ENCODE measurements at regions of chr2 and their contacts with region 1.

Region 1: DNA sequence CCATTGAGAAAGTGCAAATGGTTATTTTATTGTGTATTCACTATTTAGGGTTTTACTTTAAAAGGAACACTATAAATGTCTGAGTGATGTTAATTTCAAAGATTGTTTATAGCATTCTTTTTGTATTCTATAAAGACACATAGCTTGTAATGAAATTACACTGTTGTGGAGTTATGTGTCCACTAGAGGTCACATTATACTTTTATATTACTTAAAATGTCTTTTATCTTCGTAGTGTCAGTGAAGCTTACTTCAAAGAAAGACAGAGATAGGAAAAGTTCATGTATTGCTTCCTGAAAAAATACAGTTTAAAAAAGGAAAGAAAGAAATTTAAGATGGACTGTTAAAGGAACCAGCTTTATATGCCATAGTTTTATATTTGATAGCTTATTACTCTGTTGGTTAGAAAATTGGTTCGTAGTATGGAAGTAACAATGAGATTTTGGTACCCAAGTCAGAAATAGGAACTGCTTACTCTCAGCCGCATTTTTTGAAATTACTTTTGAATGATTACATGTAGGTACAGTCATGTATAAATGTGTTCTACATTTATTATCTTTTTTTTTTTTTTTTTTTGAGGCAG is 20.5 kb downstream of the APLF start:
- DNase-seq: peak; percentile 20
- H3K4me3 ChIP-seq: no peak overlapping the region
- H3K27ac ChIP-seq: no peak overlapping the region
- H3K4me1 ChIP-seq: peaks cover 1% of the 10 kb centered on the region
- H3K27me3 ChIP-seq: no peaks in the 10 kb centered on the region
- CTCF ChIP-seq: peak; percentile 37 to 44

Region 2: DNA sequence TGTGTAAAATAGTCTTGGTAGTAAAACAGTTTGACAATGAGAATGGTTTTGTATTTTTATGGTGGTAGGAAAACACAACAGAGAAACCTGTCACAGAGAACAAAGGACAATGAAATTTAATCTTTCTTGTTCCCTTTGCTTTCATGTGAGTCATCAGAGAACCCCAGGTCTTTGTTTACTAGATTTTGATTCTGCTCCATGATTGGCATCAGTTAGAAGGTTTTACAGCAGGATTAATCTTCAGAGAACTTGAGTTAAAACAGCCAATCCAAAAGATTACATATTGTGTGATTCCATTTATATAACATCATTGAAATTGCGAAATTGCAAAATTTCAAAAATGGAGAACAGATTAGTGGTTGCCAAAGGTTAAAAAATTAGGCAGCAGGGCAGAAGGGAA is 17.9 kb before region 1 on chr2:
- CTCF ChIA-PET with region 1: no interaction called
- dilution Hi-C with region 1: no loop called
- in situ Hi-C with region 1: no loop called
- intact Hi-C with region 1: no loop called
- DNase-seq: no peak
- H3K4me3 ChIP-seq: no peak overlapping the region
- H3K27ac ChIP-seq: no peak overlapping the region
- H3K4me1 ChIP-seq: peaks cover 25% of the 10 kb centered on the region
- H3K27me3 ChIP-seq: no peaks in the 10 kb centered on the region
- CTCF ChIP-seq: no peak

Region 3: DNA sequence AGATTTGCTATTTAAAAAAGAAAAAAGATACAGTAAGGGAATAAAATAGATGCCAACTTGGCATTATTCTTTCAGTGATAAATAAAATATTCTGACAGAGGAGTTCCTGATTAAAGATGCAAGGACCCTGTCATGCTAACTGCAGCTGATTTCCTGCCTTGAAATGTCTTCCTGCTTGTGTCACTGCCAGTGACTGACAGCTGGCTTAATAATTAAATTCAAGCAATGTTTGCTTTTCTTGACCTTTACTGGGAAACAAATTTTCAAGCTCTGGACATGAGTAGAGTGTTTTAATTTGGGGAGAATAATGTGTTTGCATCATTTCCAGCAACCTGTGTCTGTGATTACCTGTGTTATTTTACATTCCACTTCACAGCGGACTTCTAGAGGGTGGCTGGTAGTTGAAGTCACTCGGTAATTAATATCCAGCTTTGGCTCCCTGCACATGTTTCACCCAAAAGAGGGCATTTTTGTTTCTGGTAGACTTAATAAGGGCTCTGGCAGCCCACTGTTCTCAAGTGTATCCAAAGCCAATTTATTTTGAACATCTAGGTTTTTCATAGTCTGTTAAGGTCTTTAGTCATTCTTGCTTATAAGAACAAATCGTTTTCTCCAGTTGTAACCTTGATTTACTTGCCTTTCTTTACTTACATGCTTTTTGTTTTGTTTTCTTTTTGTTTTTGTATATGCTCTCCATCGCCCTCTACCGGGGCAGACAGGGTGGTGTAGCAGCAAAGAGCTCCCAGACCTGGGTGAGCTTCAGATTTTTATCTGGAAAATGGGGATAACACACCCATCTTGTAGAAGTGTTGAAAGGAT is 107.0 kb after region 1 on chr2:
- CTCF ChIA-PET with region 1: interaction called, 35 read pairs
- dilution Hi-C with region 1: no loop called
- in situ Hi-C with region 1: loop called in 1 of 2 experiments (anchors 25 kb)
- intact Hi-C with region 1: loop called (anchors 1 kb)
- DNase-seq: peak; percentile 25
- H3K4me3 ChIP-seq: no peak overlapping the region
- H3K27ac ChIP-seq: no peak overlapping the region
- H3K4me1 ChIP-seq: no peaks in the 10 kb centered on the region
- H3K27me3 ChIP-seq: no peaks in the 10 kb centered on the region
- CTCF ChIP-seq: peak; percentile 89 to 95

Region 4: DNA sequence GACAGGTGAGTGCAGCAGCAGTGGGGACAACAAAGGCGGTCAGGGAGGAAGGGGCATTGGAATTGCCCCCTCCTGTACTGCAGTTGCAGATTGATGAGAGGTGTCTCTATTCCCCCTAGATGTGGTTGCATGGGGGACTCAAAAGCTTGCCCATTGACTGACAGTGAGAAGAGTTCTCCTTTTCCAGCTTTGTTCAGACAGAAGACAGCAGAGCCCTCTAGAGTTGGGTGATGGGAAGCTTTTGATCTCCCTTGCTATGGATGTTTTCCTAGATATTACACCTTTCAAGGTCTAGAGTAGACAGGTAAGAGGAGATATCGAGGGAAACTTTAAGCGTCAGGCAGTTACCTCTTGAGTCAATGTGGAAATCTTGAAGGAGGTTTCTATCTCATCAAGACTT is 158.4 kb after region 1 on chr2:
- CTCF ChIA-PET with region 1: interaction called, 6 read pairs
- dilution Hi-C with region 1: no loop called
- in situ Hi-C with region 1: no loop called
- intact Hi-C with region 1: loop called (anchors 1 kb)
- DNase-seq: peak; percentile 24
- H3K4me3 ChIP-seq: no peak overlapping the region
- H3K27ac ChIP-seq: no peak overlapping the region
- H3K4me1 ChIP-seq: peaks cover 9% of the 10 kb centered on the region
- H3K27me3 ChIP-seq: peaks cover 21% of the 10 kb centered on the region
- CTCF ChIP-seq: peak in 1 of 2 donors; percentile 54

Region 5: GRCh38 chr2:68709421-68709911 is 221.6 kb after region 1 on chr2:
- CTCF ChIA-PET with region 1: interaction called, 11 read pairs
- dilution Hi-C with region 1: no loop called
- in situ Hi-C with region 1: no loop called
- intact Hi-C with region 1: loop called (anchors 2 kb)
- DNase-seq: peak; percentile 39
- H3K4me3 ChIP-seq: no peak overlapping the region
- H3K27ac ChIP-seq: no peak overlapping the region
- H3K4me1 ChIP-seq: no peaks in the 10 kb centered on the region
- H3K27me3 ChIP-seq: peaks cover 3% of the 10 kb centered on the region
- CTCF ChIP-seq: peak; percentile 63 to 81

Region 6: DNA sequence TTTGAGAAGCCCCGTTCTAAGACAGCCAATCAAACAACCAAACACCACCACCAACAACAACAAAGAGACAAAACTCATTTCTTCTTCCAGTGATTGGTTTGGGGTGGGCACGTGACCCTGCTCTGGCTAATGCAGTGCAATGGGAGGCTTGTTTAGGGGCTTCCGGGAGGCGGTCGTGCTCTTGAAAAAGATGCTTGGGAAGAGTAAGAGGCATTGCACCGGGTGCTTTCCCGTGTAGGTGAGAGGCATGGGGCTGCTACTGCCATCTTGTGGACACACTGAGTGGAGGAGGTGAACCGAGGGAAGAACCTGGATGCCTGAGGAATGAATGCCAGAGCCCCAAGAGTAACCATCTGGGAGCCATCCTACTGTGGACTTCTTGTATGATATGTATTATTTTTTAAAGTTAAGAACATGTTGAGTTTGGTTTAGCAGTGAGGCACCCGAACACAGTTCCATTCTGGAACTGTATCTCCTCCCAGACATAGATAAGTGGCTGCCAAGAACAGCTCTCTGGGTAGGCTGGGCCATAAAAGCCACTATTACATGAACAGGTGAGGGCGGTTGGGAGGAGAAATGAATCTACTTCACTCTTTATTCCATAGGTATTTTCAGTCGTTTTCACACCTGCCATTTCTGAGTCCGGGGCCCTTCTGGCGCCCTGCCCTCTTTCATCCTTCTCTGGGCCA is 227.6 kb after region 1 on chr2:
- CTCF ChIA-PET with region 1: no interaction called
- dilution Hi-C with region 1: no loop called
- in situ Hi-C with region 1: no loop called
- intact Hi-C with region 1: loop called (anchors 2 kb)
- DNase-seq: peak; percentile 62
- H3K4me3 ChIP-seq: no peak overlapping the region
- H3K27ac ChIP-seq: no peak overlapping the region
- H3K4me1 ChIP-seq: no peaks in the 10 kb centered on the region
- H3K27me3 ChIP-seq: no peaks in the 10 kb centered on the region
- CTCF ChIP-seq: peak; percentile 86 to 89